ENCODE measurements at regions of chr5 and their contacts with region 1.

Region 1: GRCh38 chr5:18699681-18700080 is 1065.4 kb downstream of the TAF11L14 start:
- DNase-seq: no peak
- H3K4me3 Mint-ChIP-seq: no peak overlapping the region
- H3K27ac Mint-ChIP-seq: no peak overlapping the region
- H3K4me1 Mint-ChIP-seq: peaks cover 12% of the 10 kb centered on the region
- H3K27me3 Mint-ChIP-seq: no peaks in the 10 kb centered on the region

Region 2: GRCh38 chr5:17216176-17216973 is 1483.3 kb before region 1 on chr5:
- CTCF ChIA-PET with region 1: no interaction called
- intact Hi-C with region 1: loop called (anchors 1 kb)
- DNase-seq: peak; percentile 81
- H3K4me3 Mint-ChIP-seq: peak overlapping the region; percentile 47
- H3K27ac Mint-ChIP-seq: no peak overlapping the region
- H3K4me1 Mint-ChIP-seq: peaks cover 14% of the 10 kb centered on the region
- H3K27me3 Mint-ChIP-seq: peaks cover 41% of the 10 kb centered on the region

Region 3: DNA sequence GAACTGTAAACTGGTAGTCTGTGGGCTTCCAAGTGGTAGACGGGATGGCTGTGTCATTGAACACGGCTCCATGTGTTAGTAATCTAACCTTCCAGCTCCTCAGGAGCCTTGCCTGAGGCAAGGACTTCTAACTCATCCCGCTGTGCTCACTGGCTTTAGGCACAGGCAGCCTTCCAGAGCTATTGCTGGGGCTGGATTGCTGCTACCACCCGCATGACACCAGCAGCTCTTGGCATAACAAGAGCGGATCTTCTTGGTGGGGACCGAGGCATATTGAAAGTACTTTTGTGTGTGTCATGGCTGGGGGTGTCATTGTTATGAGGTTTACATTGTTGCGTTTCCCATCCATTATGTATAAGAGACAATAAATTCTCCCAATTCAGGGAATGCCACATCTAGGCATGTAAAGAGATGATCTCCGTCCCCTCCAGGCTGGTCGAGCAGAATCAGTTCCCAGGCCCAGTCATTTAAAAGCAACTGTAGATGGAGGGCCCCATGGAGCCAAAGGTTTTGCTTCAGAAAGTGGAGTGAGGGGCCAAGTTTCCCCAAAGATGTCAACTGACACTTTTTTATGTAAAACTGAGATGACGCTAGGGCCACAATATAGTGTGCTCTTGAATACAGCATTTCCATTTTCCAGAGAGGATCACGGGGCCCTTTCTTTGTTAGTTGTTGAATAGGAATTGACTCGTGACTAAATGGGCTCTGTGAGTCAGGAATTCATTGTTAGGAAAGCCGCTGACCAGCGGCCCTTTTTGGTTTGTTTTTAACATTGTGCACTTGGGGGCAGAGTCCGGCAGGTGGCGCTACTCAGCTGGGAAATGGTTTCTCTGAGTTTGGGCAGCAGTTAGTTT is 305.9 kb before region 1 on chr5:
- CTCF ChIA-PET with region 1: no interaction called
- intact Hi-C with region 1: loop called (anchors 1 kb)
- DNase-seq: peak; percentile 59
- H3K4me3 Mint-ChIP-seq: no peak overlapping the region
- H3K27ac Mint-ChIP-seq: no peak overlapping the region
- H3K4me1 Mint-ChIP-seq: no peaks in the 10 kb centered on the region
- H3K27me3 Mint-ChIP-seq: no peaks in the 10 kb centered on the region

Region 4: DNA sequence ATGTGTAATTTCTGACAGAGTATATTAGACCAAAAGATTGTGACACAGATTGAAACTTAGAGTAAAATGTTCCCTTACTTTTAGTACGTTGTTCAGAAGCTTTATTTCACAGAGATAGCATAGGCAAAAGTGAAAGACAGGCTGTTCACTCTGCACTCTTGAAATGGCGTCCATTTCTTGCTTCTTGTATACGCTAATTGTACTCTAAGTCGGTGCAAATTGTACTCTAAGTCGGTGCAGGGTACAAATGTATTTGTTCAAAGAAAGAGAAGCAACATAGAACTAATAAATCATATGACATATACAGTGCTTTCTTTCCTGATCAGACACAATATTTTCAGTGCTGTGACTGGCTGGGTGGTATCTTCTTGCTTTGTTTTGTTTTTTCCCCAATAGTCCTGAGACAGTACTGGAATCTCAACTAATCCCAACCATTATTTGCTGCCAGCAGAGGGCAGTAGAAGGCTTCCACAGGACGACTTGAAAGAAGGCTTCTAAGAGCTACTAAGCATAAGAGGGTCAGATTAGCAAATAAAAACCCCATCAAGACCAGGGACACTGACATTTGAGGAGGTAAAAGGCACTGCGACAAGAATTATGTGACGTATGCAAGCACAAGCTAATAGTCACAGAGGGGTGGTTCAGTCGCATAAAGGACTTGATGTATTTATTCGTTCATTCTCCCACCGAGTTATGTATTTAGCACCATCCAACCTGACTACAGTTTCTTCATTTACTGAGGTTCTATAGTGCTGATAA is 233.7 kb before region 1 on chr5:
- CTCF ChIA-PET with region 1: interaction called, 8 read pairs
- intact Hi-C with region 1: loop called (anchors 1 kb)
- DNase-seq: peak; percentile 61
- H3K4me3 Mint-ChIP-seq: no peak overlapping the region
- H3K27ac Mint-ChIP-seq: no peak overlapping the region
- H3K4me1 Mint-ChIP-seq: no peaks in the 10 kb centered on the region
- H3K27me3 Mint-ChIP-seq: no peaks in the 10 kb centered on the region

Region 5: DNA sequence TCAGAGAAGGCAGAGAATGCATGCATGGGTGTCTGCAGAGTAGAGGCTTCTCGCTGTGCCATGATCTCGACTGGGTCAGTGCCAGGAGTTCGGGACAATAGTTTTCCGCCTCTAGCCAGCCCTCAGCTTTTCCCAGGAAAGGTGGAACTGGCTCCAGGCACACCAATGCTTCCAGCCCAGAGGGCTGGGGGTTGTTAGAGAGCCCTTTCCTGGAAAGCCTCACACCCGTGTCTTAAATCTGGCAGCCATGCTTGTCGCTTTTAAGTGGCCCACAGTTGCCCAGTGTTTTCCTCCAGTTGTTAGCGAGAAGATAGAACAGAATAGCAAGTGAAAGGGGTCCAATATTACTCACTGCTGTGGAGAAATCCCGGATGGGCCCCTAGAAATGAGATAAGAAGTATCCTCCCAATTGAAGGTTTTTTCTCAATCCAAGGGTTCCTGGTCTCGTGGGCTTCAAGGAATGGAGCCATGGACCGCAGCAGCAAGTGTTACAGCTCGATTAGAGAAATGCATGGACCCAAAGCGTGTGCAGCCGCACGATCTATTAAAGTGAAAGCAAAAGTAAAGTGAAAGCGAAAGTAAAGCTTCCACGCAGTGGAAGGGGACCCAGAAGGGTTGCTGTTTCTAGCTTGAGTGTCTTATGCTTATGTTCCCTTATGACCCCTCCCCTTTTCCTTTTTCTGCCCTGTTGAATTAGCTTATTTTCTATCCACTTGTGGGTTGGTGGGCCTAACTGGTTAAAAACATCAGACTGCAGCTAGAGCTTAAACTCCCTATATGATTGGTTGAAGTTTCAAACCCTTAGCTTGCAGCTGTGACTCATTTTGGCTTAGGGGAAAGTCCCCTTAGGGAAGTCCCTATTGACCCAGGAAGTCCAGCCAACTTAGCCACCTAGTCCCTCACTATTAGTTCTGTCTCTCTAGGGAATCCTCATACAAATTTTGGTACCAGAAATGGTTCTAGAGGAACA is 46.2 kb after region 1 on chr5:
- CTCF ChIA-PET with region 1: no interaction called
- intact Hi-C with region 1: loop called (anchors 2 kb)
- DNase-seq: peak; percentile 40
- H3K4me3 Mint-ChIP-seq: peak overlapping the region; percentile 81
- H3K27ac Mint-ChIP-seq: peak overlapping the region; percentile 87
- H3K4me1 Mint-ChIP-seq: peaks cover 32% of the 10 kb centered on the region
- H3K27me3 Mint-ChIP-seq: no peaks in the 10 kb centered on the region

Measured in activated naive CD4-positive, alpha-beta T cell treated with anti-CD3 and anti-CD28 coated beads for 36 hours (primary cell).